Activated CD4-positive, alpha-beta memory T cell treated with anti-CD3 and anti-CD28 coated beads, Interleukin-2, amount 10 ng/mL, durations not matched to agents 7 days and 5 days (primary cell): ENCODE measurements at regions of chr19 and their contacts with region 1.

Region 1: DNA sequence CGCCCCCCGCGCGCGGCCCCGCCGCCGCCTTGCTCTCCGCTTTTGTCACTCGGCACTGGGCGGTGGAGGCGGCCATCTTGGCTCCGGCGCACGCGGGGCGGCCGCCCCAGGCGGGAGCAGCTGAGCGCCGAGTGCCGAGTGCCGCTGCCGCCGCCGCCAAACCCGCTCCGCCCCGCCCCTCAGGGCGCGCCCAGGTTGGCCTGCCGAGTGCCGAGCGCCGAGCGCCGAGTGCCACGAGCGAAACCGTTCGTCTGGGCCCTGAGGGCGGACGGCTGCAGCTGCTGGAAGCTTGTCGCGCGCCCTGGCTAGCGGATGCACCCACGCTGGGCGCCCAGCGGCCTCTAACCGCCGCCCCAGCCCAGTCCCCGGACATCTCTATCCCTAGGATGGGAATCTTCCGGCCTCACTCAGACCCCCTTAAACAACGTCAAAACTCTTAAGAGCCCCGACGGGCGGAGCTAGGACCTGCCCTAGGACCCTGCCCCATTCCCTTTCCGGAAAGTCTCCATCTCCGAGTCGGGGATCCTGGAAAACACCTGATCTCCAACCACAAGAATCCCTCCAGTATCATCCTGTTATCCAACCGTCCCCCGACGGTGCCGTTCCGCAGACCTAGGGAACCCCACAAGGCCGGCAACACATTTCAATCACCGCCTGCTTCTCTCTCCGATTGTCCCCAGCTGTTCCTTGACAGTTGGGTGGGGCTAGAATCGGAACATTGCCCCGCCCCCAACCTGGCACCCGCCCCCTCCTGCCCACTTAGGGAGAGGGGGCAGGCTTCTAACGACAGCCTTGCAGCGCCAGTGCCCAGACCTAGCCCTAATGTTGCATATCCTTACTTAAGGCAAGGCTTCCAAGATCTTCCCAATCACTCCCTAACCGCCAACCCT is 14.1 kb upstream of the AKAP8L start:
- DNase-seq: peak; percentile 95
- H3K4me3 Mint-ChIP-seq: peak overlapping the region; percentile 93
- H3K27ac Mint-ChIP-seq: peak overlapping the region; percentile 94
- H3K4me1 Mint-ChIP-seq: peaks cover 36% of the 10 kb centered on the region
- H3K27me3 Mint-ChIP-seq: no peaks in the 10 kb centered on the region

Region 2: GRCh38 chr19:15449620-15450527 is 17.0 kb after region 1 on chr19 and contains the start of gene WIZ:
- CTCF ChIA-PET with region 1: interaction called, 8 read pairs
- POLR2A ChIA-PET with region 1: interaction called, 14 read pairs
- DNase-seq: peak; percentile 84
- H3K4me3 Mint-ChIP-seq: peak within 1 kb of the TSS; percentile 70
- H3K27ac Mint-ChIP-seq: peak within 1 kb of the TSS; percentile 81
- H3K4me1 Mint-ChIP-seq: peaks cover 29% of the 10 kb centered on the region
- H3K27me3 Mint-ChIP-seq: no peaks in the 10 kb centered on the region
- total RNA-seq, gene WIZ: 25.3 to 25.4 TPM